G401 (cell line): ENCODE measurements at regions of chr15 and their contacts with region 1.

Region 1: DNA sequence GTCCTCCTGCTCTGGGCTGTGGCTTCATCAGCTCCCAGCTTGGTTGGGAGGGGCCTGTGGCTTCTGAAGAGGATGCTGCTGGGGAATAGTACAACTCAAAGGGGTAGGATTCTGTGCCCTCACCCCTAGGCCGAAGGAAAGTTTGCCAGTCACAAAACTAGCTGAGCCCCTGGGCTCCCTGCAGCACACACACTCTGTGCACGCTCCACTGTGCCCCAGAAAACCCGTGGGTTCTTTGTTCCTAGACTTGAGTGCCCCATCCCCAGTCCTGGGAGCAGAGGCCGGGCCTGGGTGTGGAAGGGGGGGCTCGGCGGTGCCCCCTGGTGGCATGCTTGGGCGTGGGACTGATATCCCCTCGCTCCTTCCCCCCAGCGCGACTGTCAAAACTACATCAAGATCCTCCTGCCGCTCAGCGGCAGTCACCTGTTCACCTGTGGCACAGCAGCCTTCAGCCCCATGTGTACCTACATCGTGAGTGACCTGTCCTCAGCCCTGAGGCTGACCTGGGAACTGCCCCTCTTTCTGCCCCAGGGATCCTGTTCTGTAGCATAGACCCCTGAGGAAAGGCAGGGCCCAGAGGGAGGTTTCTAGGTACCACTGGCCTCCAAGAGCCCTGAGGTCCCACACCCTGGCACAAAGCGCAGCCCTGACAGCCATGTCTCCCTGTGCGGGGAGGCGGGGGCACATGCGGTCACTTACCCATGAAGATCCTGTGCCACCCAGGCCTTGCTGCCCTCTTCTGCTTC is 14.1 kb downstream of the CIB1 start:
- DNase-seq: no peak

Region 2: GRCh38 chr15:90143166-90143655 is 76.4 kb before region 1 on chr15:
- in situ Hi-C with region 1: loop called (anchors 10 kb)
- DNase-seq: peak; percentile 39

Region 3: DNA sequence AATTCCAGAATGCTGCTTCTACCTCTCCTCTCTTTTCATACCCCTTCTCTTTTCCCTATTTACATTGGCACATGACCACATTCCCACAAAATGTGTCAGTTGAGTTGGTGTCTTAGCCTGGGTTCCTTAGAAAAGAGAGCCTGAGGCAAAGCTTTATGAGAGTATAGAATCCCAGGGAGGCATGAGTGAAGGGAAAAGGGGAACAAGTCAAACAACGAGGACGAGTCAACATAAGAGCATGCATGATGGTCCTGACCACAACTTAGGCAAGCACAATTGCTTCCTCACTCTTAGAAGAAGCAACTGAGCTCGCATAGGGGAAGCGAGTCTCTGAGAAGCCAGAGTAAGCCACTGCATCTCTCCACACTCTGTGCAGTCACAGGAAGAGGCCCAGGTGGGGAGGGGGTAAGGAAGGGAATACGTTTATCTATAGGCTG is 117.1 kb after region 1 on chr15:
- in situ Hi-C with region 1: no loop called
- DNase-seq: no peak